ENCODE measurements at regions of chr17 and their contacts with region 1.

Region 1: DNA sequence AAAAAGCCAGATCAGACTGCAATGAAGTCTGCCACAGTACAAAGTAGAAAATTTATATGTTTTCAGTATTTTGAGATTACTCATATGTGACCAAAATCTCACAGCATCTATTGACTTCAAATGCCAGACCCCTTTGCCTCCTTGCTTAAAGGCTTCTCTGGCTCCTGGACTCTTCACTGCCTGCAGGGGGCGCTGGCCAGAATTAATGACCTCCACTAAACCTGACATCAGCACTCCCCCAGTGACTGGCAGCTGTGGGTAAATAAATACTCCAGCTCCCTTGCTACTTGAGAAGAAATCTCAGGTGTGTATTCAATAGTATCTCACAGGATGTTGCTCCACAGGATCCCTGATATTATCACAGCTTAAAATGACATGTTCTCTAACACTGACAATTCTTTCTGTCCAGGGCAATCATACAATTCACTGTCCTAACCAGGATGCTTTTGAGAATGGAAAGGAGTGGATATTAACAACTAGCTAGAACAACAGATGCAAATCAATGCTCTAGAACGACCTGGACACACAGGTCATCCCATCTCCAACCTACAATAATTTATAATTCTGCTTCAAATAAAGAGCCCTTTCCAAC is 4.0 kb downstream of the BECN1 start:
- DNase-seq: no peak
- H3K4me3 ChIP-seq: no peak overlapping the region
- H3K27me3 ChIP-seq: no peaks in the 10 kb centered on the region
- CTCF ChIP-seq: peak; percentile 74

Region 2: GRCh38 chr17:42660692-42661345 is 159.2 kb before region 1 on chr17:
- CTCF ChIA-PET with region 1: no interaction called
- POLR2A ChIA-PET with region 1: no interaction called
- DNase-seq: no peak
- H3K4me3 ChIP-seq: no peak overlapping the region
- H3K27me3 ChIP-seq: no peaks in the 10 kb centered on the region
- CTCF ChIP-seq: no peak

Region 3: DNA sequence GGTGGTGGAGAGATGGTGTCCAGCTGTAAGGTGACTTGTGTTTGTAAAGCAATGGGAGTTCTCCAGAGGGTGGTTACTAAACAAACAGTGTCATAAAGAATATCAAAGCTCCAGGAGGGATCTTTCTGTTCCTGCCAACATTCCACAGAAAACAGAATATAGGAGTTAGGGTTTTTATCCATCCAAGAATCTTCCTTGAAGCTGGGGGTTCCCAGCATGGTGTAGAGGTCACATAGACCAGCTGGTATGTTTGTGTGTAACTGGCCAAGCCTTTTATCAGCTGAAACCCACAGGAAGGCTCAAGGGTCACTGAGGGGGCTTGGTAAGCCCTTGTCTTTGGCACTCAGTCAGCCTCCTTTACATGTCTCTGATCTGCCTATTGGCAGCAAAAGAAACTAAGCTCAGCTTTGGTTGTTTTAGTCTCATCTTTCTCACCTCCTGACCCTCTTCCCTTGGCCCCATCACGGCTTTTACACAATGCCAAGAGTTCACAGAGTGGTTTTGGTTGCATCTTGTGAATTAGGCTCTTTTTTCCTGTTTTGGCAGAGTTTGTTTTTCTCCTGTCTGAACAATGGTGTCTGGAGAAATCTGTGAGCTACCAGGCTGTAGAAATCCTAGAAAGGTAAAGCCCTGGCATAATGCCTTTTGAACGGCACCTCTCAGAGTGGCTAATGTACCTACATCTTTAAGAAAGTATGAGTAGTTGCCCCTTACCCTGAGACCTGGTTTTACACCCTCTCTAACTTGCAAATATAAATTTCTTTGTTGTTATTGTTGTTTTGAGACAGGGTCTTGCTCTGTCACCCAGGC is 16.8 kb before region 1 on chr17:
- CTCF ChIA-PET with region 1: interaction called, 20 read pairs
- POLR2A ChIA-PET with region 1: interaction called, 4 read pairs
- DNase-seq: no peak
- H3K4me3 ChIP-seq: no peak overlapping the region
- H3K27me3 ChIP-seq: no peaks in the 10 kb centered on the region
- CTCF ChIP-seq: no peak

Region 4: DNA sequence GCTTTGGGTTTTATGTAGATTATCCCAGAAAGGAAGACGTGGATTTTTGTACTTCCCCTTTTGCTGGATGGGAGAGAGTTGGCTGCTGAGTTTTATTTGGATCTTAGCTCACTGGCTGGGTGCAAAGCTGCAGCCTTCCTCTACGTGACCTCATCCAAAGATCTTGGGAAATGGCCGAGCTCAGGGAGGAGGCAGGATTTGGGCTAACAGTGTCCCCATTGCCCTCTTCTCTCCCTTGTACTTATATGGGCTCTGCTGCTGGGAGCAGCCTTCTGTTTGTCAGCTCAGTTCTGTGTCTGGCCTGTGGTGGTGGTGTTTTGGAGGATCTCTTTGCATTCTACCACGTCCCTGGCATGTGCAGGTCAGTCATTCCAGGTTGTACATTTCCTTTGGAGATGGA is 33.0 kb after region 1 on chr17:
- CTCF ChIA-PET with region 1: no interaction called
- POLR2A ChIA-PET with region 1: no interaction called
- DNase-seq: no peak
- H3K4me3 ChIP-seq: no peak overlapping the region
- H3K27me3 ChIP-seq: no peaks in the 10 kb centered on the region; the same call in 1 of the 2 replicates
- CTCF ChIP-seq: no peak

Region 5: DNA sequence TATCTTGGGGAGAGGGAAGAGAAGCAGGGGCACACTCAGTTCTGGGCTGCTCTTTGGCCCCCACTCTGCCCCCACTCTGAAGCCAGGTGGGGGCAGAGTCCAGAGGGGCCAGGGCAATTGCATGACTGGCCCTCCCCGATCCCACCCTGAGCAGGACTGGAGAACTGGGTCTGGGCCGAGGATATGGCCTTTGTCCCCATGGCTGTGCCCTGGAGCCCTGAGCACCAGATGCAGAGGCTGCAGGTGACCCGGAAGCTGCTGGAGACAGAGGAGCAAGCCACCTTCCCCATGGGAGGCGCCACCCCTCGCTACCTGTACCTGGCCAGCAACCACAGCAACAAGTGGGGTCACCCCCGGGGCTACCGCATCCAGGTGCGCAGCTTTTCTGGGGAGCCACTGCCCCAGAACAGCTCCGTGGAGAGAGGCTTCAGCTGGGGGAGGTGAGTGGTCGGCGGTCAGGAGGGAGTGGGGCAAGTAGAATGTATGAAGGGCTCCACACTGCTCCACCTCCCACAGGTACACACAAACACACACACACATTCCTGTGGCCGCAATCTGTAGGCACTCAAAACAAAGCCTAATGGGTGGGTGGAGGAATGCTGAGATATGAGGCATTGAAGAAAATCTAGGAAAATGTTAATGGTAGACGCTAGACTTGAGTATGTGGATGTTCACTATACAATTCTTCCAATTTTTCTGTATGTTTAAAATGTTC is 52.4 kb after region 1 on chr17:
- CTCF ChIA-PET with region 1: no interaction called
- POLR2A ChIA-PET with region 1: no interaction called
- DNase-seq: no peak
- H3K4me3 ChIP-seq: no peak overlapping the region
- H3K27me3 ChIP-seq: peaks cover 3% of the 10 kb centered on the region; the same call in 1 of the 2 replicates
- CTCF ChIP-seq: no peak